ENCODE measurements at regions of chr10 and their contacts with region 1.

Region 1: DNA sequence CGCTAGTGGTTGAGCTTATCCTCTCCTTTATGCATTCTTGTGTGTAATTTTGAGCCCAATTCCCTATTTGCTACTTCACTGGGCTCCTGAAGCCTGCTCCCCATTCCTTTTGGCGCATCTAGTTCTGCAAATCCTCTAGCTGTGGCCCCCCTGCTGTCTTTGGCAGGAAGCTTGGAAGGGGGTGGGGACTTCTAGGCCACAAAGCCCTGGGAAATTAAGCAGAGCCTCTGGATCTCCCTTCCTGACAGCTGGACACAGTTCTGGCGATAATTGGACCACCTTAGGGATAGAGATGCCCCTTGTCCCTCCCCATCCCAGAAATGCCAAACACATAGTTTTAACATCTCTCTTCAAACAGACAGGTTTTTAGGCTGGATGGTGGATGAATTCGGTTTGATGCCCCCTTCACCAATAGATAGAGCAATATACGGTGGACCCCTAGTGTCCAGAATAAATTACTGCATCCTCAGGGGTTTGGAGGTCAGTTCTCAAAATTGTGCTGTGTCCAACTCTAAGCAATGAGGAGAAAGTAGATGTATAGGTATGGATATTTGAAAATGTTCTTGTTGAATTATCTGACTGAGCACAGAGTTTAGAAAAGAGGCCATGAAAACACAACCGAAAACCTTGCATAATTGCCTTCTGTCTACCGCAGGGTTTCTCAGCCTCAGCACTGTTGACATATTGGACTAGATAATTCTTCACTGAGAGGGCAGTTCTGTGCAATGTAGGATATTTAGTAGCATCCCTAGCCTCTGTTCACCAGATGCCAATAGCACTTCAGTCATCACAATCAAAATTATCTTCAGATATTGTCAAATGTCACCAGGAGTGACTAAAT is 75.5 kb downstream of the PAPSS2 start:
- DNase-seq: peak; percentile 41 to 50
- ATAC-seq: peak; percentile 91 to 96
- H3K4me3 ChIP-seq: no peak overlapping the region
- H3K27ac ChIP-seq: peak overlapping the region in 1 of 2 experiments; percentile 42; a peak in 4 of 6 replicates
- H3K4me1 ChIP-seq: peaks cover 11% of the 10 kb centered on the region
- CTCF ChIP-seq: peak; percentile 89
- EP300 ChIP-seq: no peak
- POLR2A ChIP-seq: no peak
- RAD21 ChIP-seq: peak; percentile 94

Region 2: GRCh38 chr10:87531908-87532622 is 203.1 kb before region 1 on chr10:
- CTCF ChIA-PET with region 1: interaction called, 33 read pairs
- POLR2A ChIA-PET with region 1: no interaction called
- DNase-seq: no peak
- ATAC-seq: no peak
- H3K4me3 ChIP-seq: no peak overlapping the region
- H3K27ac ChIP-seq: no peak overlapping the region
- H3K4me1 ChIP-seq: peaks cover 15% of the 10 kb centered on the region; the same call in 2 of the 3 replicates
- CTCF ChIP-seq: no peak
- EP300 ChIP-seq: no peak
- POLR2A ChIP-seq: no peak
- RAD21 ChIP-seq: no peak

Region 3: GRCh38 chr10:87659571-87660483 is 75.4 kb before region 1 on chr10 and contains the start of gene PAPSS2:
- CTCF ChIA-PET with region 1: interaction called, 23 read pairs
- POLR2A ChIA-PET with region 1: no interaction called
- DNase-seq: peak; percentile 42 to 75
- ATAC-seq: peak; percentile 83
- H3K4me3 ChIP-seq: peak within 1 kb of the TSS; percentile 78
- H3K27ac ChIP-seq: peak within 1 kb of the TSS; percentile 73 to 95
- H3K4me1 ChIP-seq: peaks cover 48% of the 10 kb centered on the region
- CTCF ChIP-seq: no peak; the same call in 2 of the 3 replicates
- EP300 ChIP-seq: no peak
- POLR2A ChIP-seq: peak; percentile 20
- RAD21 ChIP-seq: peak in 1 of 2 experiments; percentile 30; a peak in 2 of 5 replicates
- polyA plus RNA-seq, gene PAPSS2: 27.7 and 37.9 TPM in 2 replicates

Region 4: DNA sequence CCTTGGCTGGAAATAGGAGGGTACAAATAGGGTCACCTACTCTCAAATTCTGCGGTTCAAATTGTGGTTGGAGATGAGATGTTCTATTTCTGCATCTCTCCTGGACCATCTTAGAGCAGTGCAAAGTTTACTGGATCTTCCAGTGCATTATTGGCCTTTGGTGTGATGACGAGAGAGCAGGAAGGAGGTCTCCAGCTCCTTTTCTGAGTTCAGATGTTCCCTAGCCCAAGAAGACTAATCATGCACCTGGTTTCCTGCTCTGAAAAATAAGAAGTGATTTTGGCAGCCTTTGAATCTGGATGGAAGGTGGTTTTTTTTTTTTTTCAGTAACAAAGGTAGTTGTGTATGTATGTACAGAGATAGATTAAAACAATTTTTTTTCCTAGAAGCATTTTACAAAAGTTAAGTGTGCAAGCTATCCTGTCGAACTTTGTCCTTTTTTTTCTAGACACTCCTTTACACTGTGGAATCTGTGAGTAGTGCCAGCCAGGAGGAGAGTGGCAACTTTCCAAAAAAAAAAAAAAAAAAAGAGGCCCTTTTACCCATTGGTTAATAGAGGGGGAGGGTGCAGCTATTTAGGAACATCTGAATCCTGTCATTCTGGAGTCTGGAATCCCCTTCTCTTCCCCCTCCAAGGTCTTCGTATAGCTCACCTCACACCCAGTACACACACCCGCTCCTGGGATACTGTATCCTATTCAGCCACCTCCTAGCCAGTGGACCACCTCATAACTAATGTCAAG is 49.2 kb before region 1 on chr10:
- CTCF ChIA-PET with region 1: interaction called, 10 read pairs
- POLR2A ChIA-PET with region 1: no interaction called
- DNase-seq: no peak
- ATAC-seq: peak in 1 of 2 experiments; percentile 53; a peak in 3 of 6 replicates
- H3K4me3 ChIP-seq: no peak overlapping the region
- H3K27ac ChIP-seq: peak overlapping the region in 1 of 2 experiments; percentile 1; a peak in 1 of 6 replicates
- H3K4me1 ChIP-seq: peaks cover 17% of the 10 kb centered on the region
- CTCF ChIP-seq: no peak
- EP300 ChIP-seq: no peak
- POLR2A ChIP-seq: no peak
- RAD21 ChIP-seq: no peak

Region 5: DNA sequence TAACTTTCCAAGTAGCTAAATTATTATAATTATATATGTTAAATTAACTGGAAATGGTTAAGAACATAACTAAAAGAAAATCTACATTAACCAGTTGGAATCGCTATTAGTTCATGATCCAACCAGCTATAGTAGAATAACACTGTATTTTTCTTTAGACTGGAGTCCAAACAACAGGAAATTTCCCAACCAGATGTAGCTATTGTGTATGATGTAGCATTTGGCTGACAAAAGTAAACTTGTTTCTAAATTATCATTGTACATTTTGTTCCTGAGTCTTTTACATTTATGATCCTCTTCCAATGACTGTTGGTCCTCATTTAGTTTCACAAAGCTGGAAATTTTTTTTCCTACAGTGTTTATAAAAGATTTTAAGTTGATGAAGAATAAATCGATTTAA is 13.4 kb before region 1 on chr10:
- CTCF ChIA-PET with region 1: interaction called, 24 read pairs
- POLR2A ChIA-PET with region 1: no interaction called
- DNase-seq: no peak
- ATAC-seq: no peak
- H3K4me3 ChIP-seq: no peak overlapping the region
- H3K27ac ChIP-seq: no peak overlapping the region
- H3K4me1 ChIP-seq: no peaks in the 10 kb centered on the region
- CTCF ChIP-seq: no peak
- EP300 ChIP-seq: no peak
- POLR2A ChIP-seq: no peak
- RAD21 ChIP-seq: no peak